PC-9 (cell line): ENCODE measurements at regions of chr3 and their contacts with region 1.

Region 1: GRCh38 chr3:55721716-55722484 is 234.8 kb upstream of the WNT5A start:
- DNase-seq: peak in 1 of 2 experiments; percentile 53
- H3K4me3 ChIP-seq: no peak overlapping the region
- H3K27ac ChIP-seq: 0 out of 2 replicates have a peak overlapping the region, but pooled peaks have one; percentile 20
- H3K4me1 ChIP-seq: peaks cover 16% of the 10 kb centered on the region
- H3K27me3 ChIP-seq: no peaks in the 10 kb centered on the region
- CTCF ChIP-seq: peak; percentile 65

Region 2: DNA sequence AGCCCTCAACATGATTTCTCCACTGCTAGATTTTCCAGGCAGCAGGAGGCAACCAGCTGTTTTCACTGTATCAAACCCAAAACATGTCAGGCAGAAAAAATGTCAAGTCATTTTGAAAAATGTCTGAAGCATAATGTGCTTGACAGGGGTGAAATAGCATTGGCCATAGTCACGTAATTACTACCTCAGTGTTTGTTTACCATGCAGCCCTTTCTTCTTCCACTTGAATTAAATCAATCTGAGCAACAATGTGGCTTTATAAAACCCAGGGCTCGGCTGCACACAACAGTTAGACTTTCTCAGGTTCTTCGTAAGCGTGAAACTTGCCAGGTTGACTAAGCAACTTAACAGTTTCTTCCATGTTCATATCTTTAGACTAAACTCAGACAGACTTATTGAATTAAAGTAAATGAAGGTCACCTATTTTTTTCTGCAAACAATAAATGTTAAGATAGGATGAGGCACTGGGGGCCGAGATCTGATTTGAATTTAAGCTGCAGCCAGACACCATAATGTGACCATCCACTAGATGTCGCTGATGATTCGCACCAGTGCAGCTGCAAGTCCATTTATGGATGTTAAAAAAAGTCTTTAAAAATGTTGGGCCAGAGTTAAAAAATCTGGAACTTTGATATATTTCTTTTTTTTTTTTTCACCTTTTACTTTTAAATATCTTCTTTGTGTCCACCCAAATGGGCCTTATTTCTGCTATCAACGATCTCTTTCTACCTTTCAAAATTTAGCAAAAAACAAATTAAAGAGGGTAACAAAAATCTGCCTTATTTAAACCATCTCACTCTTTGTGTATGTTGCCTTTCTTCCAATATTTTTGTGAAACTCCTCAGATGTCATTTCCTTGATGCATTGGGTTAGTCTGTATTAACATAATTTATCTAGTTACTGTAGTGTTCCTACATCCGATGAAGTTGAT is 1293.7 kb before region 1 on chr3:
- CTCF ChIA-PET with region 1: no interaction called
- POLR2A ChIA-PET with region 1: interaction called, 3 read pairs
- intact Hi-C with region 1: loop called (anchors 10 kb)
- DNase-seq: peak in 1 of 2 experiments; percentile 37
- H3K4me3 ChIP-seq: no peak overlapping the region
- H3K27ac ChIP-seq: no peak overlapping the region
- H3K4me1 ChIP-seq: no peaks in the 10 kb centered on the region
- H3K27me3 ChIP-seq: peaks cover 6% of the 10 kb centered on the region; the same call in 1 of the 2 replicates
- CTCF ChIP-seq: peak; percentile 74

Region 3: DNA sequence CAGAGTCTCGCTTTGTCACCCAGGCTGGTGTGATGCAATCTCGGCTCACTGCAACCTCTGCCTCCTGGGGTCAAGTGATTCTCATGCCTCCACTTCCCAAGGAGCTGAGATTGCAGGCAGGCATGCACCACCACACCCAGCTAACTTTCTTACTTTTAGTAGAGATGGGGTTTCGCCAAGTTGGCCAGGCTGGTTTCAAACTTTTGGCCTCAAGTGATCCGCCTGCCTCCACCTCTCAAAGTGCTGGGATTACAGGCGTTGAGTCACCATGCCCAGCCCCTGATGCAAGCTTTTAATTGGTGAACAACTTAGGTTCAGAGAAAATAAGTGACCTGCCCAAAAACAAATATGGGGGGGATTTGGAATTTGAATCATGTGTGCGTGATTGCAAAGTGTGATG is 1040.2 kb before region 1 on chr3:
- CTCF ChIA-PET with region 1: no interaction called
- POLR2A ChIA-PET with region 1: no interaction called
- intact Hi-C with region 1: no loop called
- DNase-seq: no peak
- H3K4me3 ChIP-seq: no peak overlapping the region
- H3K27ac ChIP-seq: no peak overlapping the region
- H3K4me1 ChIP-seq: no peaks in the 10 kb centered on the region
- H3K27me3 ChIP-seq: no peaks in the 10 kb centered on the region
- CTCF ChIP-seq: no peak

Region 4: DNA sequence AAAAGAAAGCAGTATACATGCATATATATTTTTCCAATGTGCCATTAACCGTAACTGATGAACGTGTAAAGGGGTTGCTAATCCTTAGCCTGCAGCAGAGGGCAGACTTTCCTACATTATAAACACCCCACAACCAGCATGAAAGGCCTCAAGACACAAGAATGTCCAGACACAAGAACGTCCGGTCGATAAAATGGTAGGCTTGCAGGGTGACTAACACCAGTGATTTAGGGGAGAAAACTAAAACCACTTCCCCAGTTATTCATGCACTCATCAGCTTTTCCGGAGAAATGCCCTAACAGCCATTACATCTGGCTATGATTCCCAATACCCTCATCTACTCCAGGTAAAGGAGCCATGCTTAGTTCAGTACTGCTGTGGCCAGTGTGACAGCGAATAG is 851.5 kb before region 1 on chr3:
- CTCF ChIA-PET with region 1: no interaction called
- POLR2A ChIA-PET with region 1: no interaction called
- intact Hi-C with region 1: loop called (anchors 1 kb)
- DNase-seq: peak; percentile 48 to 72
- H3K4me3 ChIP-seq: no peak overlapping the region
- H3K27ac ChIP-seq: no peak overlapping the region; the same call in 1 of the 2 replicates
- H3K4me1 ChIP-seq: peaks cover 17% of the 10 kb centered on the region
- H3K27me3 ChIP-seq: no peaks in the 10 kb centered on the region
- CTCF ChIP-seq: peak; percentile 68

Region 5: DNA sequence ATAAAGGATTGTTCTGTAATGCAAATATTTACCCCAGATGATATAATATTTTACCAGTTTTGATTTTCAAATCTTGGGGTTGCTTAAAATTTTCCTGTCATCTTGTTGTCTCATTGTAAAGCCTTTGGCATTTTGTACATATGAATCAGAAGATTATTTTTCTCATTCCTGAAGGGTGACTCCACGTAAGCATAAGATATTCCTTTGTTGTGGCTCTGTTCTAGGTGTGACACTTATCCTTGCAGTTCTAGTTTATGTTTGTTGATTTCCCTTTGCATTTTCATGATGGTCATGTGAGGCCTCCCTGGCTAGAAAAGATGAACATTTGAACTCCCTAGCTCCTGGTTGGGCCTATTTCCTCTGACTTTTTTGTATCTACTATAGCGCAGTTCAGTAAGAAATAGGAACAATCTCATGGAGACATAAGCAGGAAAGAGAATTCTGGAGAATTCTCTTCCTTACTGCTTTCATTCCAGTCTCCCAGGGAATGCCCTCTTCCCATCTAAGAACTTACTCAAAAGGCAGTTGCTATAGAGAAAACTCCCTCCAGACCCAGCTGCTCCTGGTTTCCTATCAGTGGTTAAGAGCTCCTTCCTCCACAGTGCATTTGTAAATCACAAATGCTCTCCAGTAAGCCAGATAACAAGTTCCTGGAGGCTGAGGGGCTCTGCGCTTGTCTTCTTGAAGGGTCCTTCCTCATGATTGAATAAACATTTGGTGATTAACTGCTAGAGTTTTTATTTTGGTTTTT is 359.5 kb before region 1 on chr3:
- CTCF ChIA-PET with region 1: no interaction called
- POLR2A ChIA-PET with region 1: no interaction called
- intact Hi-C with region 1: loop called (anchors 5 kb)
- DNase-seq: peak; percentile 23 to 85
- H3K4me3 ChIP-seq: no peak overlapping the region
- H3K27ac ChIP-seq: peak overlapping the region; percentile 60
- H3K4me1 ChIP-seq: peaks cover 29% of the 10 kb centered on the region
- H3K27me3 ChIP-seq: no peaks in the 10 kb centered on the region
- CTCF ChIP-seq: no peak

Region 6: DNA sequence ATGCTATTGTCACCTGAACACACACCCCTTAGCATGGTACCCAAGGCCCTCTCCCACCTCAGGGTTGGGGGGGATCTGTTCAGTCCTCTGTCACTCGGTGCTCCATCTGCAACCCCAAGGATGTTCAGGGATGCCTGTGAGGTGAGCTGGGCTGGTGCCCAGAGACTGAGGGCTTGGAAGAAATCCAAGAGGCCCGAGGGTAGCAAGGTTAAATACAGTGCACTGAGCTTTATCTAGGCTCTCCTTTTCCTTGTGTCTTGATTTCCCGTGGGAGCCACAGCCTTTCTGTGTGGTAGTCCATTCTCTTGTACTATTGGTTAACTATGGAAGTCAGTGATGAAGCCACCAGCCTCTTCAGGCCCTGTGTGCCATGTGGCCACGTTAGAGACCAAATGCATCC is 216.1 kb before region 1 on chr3:
- CTCF ChIA-PET with region 1: interaction called, 3 read pairs
- POLR2A ChIA-PET with region 1: interaction called, 3 read pairs
- intact Hi-C with region 1: loop called (anchors 1 kb)
- DNase-seq: peak; percentile 44 to 66
- H3K4me3 ChIP-seq: no peak overlapping the region
- H3K27ac ChIP-seq: peak overlapping the region; percentile 29; the same call in 1 of the 2 replicates
- H3K4me1 ChIP-seq: no peaks in the 10 kb centered on the region
- H3K27me3 ChIP-seq: no peaks in the 10 kb centered on the region
- CTCF ChIP-seq: no peak

Region 7: DNA sequence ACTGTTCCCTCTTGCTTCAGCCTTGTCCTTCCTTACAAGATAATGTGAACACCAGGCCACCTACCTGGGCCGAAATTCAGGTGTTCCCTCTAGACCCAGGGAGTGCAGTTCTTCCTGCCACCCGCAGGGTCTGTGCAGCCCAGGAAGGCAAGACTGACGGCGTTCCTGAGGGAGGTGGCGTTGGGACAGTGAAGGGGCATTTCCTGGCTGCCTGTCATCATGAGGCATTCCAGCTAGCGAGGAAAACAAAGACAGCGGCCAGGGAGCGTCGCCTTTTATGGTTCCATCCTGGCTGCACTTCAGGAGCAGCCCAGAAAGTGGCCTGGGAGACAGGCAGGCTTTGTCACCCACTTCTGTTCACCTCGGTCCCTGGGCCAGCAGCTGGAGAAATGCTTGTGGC is 150.0 kb before region 1 on chr3:
- CTCF ChIA-PET with region 1: no interaction called
- POLR2A ChIA-PET with region 1: interaction called, 3 read pairs
- intact Hi-C with region 1: loop called (anchors 1 kb)
- DNase-seq: peak in 1 of 2 experiments; percentile 87
- H3K4me3 ChIP-seq: no peak overlapping the region
- H3K27ac ChIP-seq: no peak overlapping the region
- H3K4me1 ChIP-seq: peaks cover 19% of the 10 kb centered on the region
- H3K27me3 ChIP-seq: no peaks in the 10 kb centered on the region
- CTCF ChIP-seq: no peak

Region 8: GRCh38 chr3:55897573-55898224 is 175.8 kb after region 1 on chr3:
- CTCF ChIA-PET with region 1: no interaction called
- POLR2A ChIA-PET with region 1: no interaction called
- intact Hi-C with region 1: loop called (anchors 1 kb)
- DNase-seq: peak; percentile 20 to 45
- H3K4me3 ChIP-seq: no peak overlapping the region
- H3K27ac ChIP-seq: no peak overlapping the region
- H3K4me1 ChIP-seq: peaks cover 9% of the 10 kb centered on the region; the same call in 1 of the 2 replicates
- H3K27me3 ChIP-seq: no peaks in the 10 kb centered on the region
- CTCF ChIP-seq: peak; percentile 78